ENCODE measurements at regions of chr2 and their contacts with region 1.

Region 1: DNA sequence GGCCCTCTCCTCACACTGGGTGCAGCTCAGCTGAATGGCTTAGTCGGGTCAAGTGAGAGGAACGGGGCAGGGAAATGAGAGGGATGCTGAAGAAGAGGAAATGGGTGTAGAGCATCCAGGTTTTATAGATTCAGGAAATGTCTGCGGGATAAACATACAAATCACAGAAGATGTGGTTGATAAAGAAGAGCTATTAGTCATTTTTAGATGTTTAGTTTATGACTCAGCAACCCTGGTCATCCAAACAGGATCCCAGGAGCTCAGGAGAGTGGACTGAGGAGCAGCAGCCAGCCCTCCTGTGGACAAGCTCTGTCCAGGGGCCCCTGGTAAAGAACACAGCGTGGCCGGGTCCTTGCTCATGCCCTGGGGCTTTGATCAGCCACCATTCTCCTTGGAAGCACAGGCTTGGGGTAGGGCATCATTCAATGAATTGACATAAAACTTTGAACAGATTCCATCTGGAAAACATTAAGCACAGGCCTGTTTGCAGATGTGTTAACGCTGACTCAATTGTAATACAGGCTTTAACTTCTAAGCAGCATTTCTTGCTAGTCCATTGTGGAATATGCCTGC is 83.0 kb downstream of the NPAS2 start:
- DNase-seq: peak; percentile 89
- H3K4me3 ChIP-seq: no peak overlapping the region
- CTCF ChIP-seq: no peak

Region 2: GRCh38 chr2:100826494-100826893 is 76.4 kb before region 1 on chr2:
- in situ Hi-C with region 1: loop called (anchors 5 kb)
- DNase-seq: no peak
- H3K4me3 ChIP-seq: no peak overlapping the region
- CTCF ChIP-seq: no peak

Region 3: GRCh38 chr2:100968146-100969145 is 65.5 kb after region 1 on chr2:
- in situ Hi-C with region 1: no loop called
- DNase-seq: no peak
- H3K4me3 ChIP-seq: no peak overlapping the region
- CTCF ChIP-seq: no peak

Region 4: GRCh38 chr2:101012706-101013181 is 109.8 kb after region 1 on chr2:
- in situ Hi-C with region 1: no loop called
- DNase-seq: peak; percentile 16
- H3K4me3 ChIP-seq: no peak overlapping the region
- CTCF ChIP-seq: peak; percentile 72

Measured in astrocyte of the cerebellum (primary cell).